Astrocyte of the cerebellum (primary cell): ENCODE measurements at regions of chr17 and their contacts with region 1.

Region 1: GRCh38 chr17:19464031-19465026 is 53.3 kb downstream of the RNF112 start:
- DNase-seq: peak; percentile 29
- H3K4me3 ChIP-seq: no peak overlapping the region
- CTCF ChIP-seq: no peak

Region 2: GRCh38 chr17:19290066-19290705 is 174.1 kb before region 1 on chr17:
- in situ Hi-C with region 1: loop called (anchors 10 kb)
- DNase-seq: no peak
- H3K4me3 ChIP-seq: no peak overlapping the region
- CTCF ChIP-seq: no peak